Activated T-helper 2 cell treated with anti-CD3 and anti-CD28 coated beads, Interferon-gamma antibody, Interleukin-2, Interleukin-4, amounts not matched to agents 10 μg/mL and 5 μg/mL and 100 μg/mL, durations not matched to agents 14 hours and 24 hours and 36 hours (primary cell): ENCODE measurements at regions of chr6 and their contacts with region 1.

Region 1: DNA sequence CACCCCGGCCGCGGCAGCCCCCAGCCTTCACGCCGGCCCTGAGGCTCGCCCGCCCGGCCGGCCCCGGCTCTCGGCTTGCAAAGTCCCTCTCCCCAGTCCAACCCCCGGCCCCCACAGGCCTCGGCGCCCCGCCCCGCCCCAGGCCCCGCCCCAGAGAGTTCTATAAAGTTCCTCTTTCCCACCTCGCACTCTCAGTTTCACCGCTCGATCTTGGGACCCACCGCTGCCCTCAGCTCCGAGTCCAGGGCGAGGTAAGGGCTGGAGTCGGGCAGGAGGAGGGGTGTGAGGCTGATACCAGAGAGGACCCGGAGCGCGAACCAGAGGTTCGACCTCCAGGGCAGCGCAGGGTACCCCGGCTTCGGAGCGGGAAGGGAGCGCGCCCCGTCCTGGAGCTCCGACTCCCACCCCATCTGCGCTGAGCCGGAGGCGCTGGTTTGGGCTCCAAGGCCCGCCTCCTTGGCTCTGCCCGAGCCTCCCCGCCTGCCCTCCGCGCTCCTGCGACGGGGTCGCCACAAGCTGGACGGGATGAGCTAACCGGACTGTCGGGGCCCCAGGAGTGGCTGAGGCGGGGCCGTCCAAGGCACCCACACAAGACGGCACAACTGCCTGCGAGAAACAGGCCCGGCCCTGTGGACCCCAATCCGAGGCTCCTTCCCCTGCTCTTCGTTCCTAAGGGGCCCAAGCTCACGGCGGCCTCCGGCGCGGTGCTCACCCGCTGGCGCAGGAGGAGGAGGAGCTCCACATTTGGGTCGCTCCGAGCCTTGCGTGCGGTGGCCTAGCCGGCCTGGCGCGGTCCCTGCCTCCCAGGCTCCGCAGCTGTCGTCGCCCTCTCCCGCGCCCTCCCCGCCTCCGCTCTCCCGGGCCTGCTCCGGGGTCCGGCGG is at the start of gene IRF4:
- DNase-seq: peak; percentile 70
- H3K4me3 Mint-ChIP-seq: peak within 1 kb of the TSS; percentile 95
- H3K27ac Mint-ChIP-seq: peak within 1 kb of the TSS; percentile 96
- H3K4me1 Mint-ChIP-seq: peaks cover 36% of the 10 kb centered on the region
- H3K27me3 Mint-ChIP-seq: no peaks in the 10 kb centered on the region
- total RNA-seq, gene IRF4: 1,053 and 1,062 TPM in 2 replicates

Region 2: GRCh38 chr6:188821-189655 is 202.8 kb before region 1 on chr6:
- intact Hi-C with region 1: loop called (anchors 1 kb)
- DNase-seq: peak; percentile 77
- H3K4me3 Mint-ChIP-seq: peak overlapping the region; percentile 20
- H3K27ac Mint-ChIP-seq: peak overlapping the region; percentile 71
- H3K4me1 Mint-ChIP-seq: peaks cover 46% of the 10 kb centered on the region
- H3K27me3 Mint-ChIP-seq: no peaks in the 10 kb centered on the region

Region 3: GRCh38 chr6:203661-204060 is 188.1 kb before region 1 on chr6:
- intact Hi-C with region 1: no loop called
- DNase-seq: no peak
- H3K4me3 Mint-ChIP-seq: no peak overlapping the region
- H3K27ac Mint-ChIP-seq: no peak overlapping the region
- H3K4me1 Mint-ChIP-seq: peaks cover 9% of the 10 kb centered on the region
- H3K27me3 Mint-ChIP-seq: peaks cover 8% of the 10 kb centered on the region

Region 4: DNA sequence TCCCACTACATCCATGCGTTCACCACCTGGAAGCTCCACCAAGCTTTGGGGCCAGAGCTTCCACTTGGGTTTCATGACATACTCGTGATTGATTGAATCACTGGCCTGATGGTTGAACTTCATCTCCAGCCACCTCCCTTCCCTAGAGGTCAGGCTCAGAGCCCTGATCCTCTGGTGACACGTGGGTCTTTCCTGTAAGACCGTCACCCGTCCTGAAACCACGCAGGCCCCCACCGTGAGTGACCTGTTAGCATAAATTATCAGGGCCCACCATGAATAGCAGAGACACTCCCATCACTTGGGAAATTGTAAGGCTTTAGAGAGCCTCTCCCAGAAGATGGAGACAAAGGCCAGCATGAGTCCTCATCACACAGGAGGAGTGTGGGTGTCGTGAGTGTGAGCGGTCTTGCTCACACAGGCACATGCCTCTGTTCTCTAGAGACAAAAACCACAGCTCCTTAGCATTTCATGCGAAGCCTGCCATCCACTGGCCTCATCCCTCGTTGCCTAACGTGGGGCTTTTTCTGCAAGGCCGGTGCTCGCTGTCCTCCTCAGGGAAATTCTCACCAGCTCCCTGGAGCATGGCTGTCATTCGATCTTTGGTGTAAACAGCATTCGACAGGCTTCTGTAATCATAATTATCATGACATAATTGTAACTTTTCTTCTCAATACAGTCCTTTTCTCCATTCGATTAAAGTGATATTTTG is 164.6 kb before region 1 on chr6:
- intact Hi-C with region 1: loop called (anchors 1 kb)
- DNase-seq: no peak
- H3K4me3 Mint-ChIP-seq: no peak overlapping the region
- H3K27ac Mint-ChIP-seq: peak overlapping the region; percentile 28
- H3K4me1 Mint-ChIP-seq: peaks cover 76% of the 10 kb centered on the region
- H3K27me3 Mint-ChIP-seq: no peaks in the 10 kb centered on the region

Region 5: DNA sequence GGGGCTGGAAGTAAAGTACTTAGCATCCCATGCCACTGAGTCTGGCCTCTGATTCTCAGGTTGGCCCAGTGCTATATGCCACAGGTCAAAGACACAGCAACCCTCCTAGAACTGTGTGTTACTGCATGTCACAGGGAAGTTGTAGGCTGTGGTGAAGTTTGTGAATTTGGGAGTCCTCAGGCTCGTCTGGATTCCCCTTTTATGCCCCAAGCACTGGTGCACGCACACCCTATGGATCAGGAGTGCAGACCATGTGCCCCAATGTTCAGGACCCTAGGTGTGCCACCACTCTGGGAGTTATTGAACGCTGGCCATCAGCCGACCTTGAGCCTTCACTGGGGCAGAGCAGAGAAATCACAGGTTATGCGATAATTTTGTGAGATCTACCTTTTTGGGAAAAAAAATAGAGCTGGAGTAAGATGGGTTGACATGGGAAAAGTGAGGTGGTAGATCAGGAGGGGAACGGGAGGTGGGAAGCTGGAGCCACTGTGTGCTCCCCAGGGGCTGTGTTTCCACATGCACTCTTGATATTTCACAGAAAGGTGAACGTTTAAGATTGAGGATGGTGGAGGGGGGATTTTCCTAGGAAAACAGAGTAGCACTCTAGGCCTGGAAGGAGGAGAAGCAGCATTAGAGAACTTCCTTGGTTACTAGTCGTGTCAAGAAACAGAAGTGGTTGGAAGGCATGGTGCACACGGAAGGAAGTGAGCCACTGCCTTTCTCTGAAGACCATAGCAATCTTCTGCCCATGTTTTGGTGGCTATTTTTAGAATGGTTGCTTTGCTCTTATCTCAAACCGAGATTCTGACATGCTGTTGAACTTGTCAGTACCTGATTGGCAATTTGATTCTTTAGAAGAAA is 55.4 kb before region 1 on chr6:
- intact Hi-C with region 1: loop called (anchors 1 kb)
- DNase-seq: peak; percentile 23
- H3K4me3 Mint-ChIP-seq: peak overlapping the region; percentile 35
- H3K27ac Mint-ChIP-seq: peak overlapping the region; percentile 74
- H3K4me1 Mint-ChIP-seq: peaks cover 55% of the 10 kb centered on the region
- H3K27me3 Mint-ChIP-seq: no peaks in the 10 kb centered on the region

Region 6: GRCh38 chr6:446418-447366 is 54.9 kb after region 1 on chr6:
- intact Hi-C with region 1: loop called (anchors 2 kb)
- DNase-seq: peak; percentile 88
- H3K4me3 Mint-ChIP-seq: peak overlapping the region; percentile 40
- H3K27ac Mint-ChIP-seq: peak overlapping the region; percentile 91
- H3K4me1 Mint-ChIP-seq: peaks cover 54% of the 10 kb centered on the region
- H3K27me3 Mint-ChIP-seq: no peaks in the 10 kb centered on the region

Region 7: DNA sequence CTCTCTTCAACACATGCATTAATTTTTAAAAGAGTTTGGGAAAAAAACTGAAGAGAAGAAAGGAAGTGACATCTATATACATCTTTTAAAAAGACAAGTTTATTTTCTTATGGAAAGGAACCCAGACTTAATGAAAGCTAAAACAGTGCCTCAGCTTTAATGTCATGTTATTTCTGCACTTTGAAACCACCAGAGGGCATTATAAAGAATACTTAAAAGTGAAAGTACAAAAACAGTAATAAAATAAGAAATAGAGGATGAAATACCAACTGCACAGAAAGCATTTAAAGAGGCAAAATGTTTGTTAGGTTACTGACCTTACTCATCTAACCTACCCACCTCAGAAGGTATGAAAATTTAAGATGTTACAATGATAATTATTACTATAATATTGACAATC is 166.3 kb after region 1 on chr6:
- intact Hi-C with region 1: loop called (anchors 1 kb)
- DNase-seq: no peak
- H3K4me3 Mint-ChIP-seq: no peak overlapping the region
- H3K27ac Mint-ChIP-seq: peak overlapping the region; percentile 88
- H3K4me1 Mint-ChIP-seq: peaks cover 63% of the 10 kb centered on the region
- H3K27me3 Mint-ChIP-seq: no peaks in the 10 kb centered on the region

Region 8: DNA sequence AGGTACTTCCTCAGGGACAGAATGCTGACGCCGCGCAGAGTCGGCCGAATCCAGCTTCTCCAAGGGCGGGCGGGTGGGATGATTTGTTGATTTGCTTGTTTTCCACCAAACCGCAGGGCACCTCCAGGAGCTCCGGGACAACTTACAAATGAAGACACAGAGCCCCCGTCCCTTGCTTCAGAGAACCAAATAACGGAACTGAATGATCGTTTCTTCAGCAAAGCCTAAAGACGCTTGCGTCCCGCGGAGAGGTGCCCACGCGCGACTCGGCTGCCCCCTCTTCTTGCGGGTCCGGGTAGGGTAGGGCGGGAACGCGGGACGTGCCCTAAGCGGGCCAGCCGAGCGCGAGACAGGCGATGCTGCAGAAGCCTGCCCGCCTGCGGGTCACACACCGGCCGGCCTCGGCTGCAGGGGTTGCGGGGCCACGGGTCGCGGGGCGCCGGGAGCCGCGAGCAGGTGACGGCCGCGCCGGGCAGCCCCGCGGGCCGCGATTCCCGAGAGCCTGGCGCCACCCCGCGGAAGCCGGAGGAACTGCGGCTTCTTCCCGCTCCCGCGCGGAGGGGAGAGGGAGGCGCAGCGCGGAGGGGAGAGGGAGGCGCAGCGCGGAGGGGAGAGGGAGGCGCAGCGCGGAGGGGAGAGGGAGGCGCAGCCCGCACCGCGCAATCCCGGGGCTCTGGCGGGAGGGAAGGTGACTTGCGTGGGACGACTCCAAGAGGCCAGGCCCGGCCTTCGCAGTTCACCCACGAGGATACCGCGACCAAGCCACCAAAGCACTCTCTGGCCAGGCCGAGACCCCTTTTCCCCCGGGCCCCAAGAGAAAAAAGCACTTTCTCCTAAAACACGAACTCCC is 989.9 kb after region 1 on chr6:
- intact Hi-C with region 1: loop called (anchors 5 kb)
- DNase-seq: peak; percentile 46
- H3K4me3 Mint-ChIP-seq: no peak overlapping the region
- H3K27ac Mint-ChIP-seq: no peak overlapping the region
- H3K4me1 Mint-ChIP-seq: peaks cover 24% of the 10 kb centered on the region
- H3K27me3 Mint-ChIP-seq: peaks cover 73% of the 10 kb centered on the region